Heart right ventricle (tissue), 16 donors: ENCODE measurements at regions of chr5 and their contacts with region 1.

Region 1: DNA sequence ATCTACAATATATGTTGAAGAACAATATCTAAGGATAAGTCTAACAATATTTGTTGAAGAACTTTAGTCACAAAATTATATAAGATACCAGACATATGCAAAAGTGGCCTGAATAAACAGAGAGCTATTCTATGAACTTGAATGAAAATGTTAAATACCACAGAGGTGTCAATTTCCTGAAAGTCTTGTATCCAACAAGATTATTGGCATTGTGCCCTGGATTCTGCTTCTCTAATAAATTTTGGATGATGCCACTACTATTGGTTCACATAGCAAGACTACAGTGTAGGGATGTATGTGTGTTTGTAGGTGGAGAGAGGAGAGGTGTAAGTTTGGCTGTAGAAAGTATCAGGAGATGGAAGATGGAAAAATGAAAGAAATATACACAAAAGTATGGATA is 731.8 kb upstream of the RGMB start:
- DNase-seq: no peak
- ATAC-seq: no peak
- H3K4me3 ChIP-seq: no peak overlapping the region
- H3K27ac ChIP-seq: no peak overlapping the region
- H3K4me1 ChIP-seq: no peaks in the 10 kb centered on the region
- H3K27me3 ChIP-seq: no peaks in the 10 kb centered on the region
- CTCF ChIP-seq: no peak

Region 2: DNA sequence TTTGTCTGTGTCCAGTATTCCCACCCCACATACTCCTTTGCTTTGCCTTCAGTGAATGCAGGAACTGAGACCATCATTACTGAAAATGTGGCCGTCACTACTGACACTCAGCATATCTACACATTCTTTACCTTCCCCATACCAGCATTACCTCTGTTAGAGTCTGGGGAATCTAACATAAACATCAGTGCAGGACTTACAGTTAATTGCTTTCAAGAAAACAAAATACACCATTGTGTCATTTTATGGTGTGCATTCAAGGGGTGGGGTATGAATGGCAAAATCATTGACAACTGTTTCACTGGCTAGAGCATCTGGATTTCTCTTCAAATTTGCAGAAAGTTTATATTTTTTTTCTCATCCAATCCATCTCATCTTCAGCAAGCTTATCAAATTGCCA is 127.2 kb before region 1 on chr5:
- intact Hi-C with region 1: loop called in 1 of 10 experiments (anchors 5 kb)
- DNase-seq: no peak
- ATAC-seq: no peak
- H3K4me3 ChIP-seq: no peak overlapping the region
- H3K27ac ChIP-seq: no peak overlapping the region
- H3K4me1 ChIP-seq: peaks cover 0 to 4% (median 0%) of the 10 kb centered on the region in 9 donors
- H3K27me3 ChIP-seq: no peaks in the 10 kb centered on the region
- CTCF ChIP-seq: no peak

Region 3: DNA sequence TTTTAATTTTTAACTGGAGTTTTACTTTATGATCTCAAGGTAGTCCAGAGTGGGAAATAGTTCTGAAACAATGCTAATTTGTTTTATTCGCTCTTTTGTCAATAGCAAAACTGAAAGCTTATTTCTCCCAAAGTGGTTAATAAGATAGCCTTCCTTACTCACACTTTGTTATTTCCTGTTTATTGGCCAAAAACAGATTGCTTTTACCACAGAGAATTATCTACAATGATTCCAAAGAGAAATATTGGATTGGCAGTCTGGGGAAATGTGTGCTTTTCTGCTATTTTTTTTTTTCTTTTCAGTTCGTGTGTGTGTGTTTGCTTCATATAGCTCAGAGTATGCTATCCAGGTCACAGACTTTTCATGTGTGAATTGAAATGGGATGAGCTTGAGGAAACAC is 24.9 kb before region 1 on chr5:
- intact Hi-C with region 1: loop called in 1 of 10 experiments (anchors 1 kb)
- DNase-seq: no peak
- ATAC-seq: no peak
- H3K4me3 ChIP-seq: no peak overlapping the region
- H3K27ac ChIP-seq: no peak overlapping the region
- H3K4me1 ChIP-seq: no peaks in the 10 kb centered on the region
- H3K27me3 ChIP-seq: no peaks in the 10 kb centered on the region
- CTCF ChIP-seq: no peak

Region 4: GRCh38 chr5:98205691-98206461 is 164.2 kb after region 1 on chr5:
- intact Hi-C with region 1: no loop called
- DNase-seq: no peak
- ATAC-seq: peak in 1 of 8 donors; percentile 42
- H3K4me3 ChIP-seq: no peak overlapping the region
- H3K27ac ChIP-seq: no peak overlapping the region
- H3K4me1 ChIP-seq: no peaks in the 10 kb centered on the region
- H3K27me3 ChIP-seq: no peaks in the 10 kb centered on the region
- CTCF ChIP-seq: no peak